HEK293T (cell line): ENCODE measurements at regions of chr4 and their contacts with region 1.

Region 1: GRCh38 chr4:21768349-21769310 is 179.9 kb downstream of the KCNIP4 start:
- DNase-seq: peak; percentile 13

Region 2: GRCh38 chr4:21514022-21514694 is 254.5 kb before region 1 on chr4:
- CTCF ChIA-PET with region 1: interaction called, 11 read pairs
- POLR2A ChIA-PET with region 1: no interaction called
- DNase-seq: no peak

Region 3: GRCh38 chr4:21845663-21846062 is 77.0 kb after region 1 on chr4:
- CTCF ChIA-PET with region 1: no interaction called
- POLR2A ChIA-PET with region 1: no interaction called
- DNase-seq: no peak